ENCODE measurements at regions of chr3 and their contacts with region 1.

Region 1: GRCh38 chr3:71583566-71584449 is at the start of gene FOXP1:
- DNase-seq: peak; percentile 59
- ATAC-seq: peak; percentile 30
- H3K4me3 Mint-ChIP-seq: peak within 1 kb of the TSS; percentile 92
- H3K27ac Mint-ChIP-seq: peak within 1 kb of the TSS; percentile 93
- H3K4me1 Mint-ChIP-seq: peaks cover 53% of the 10 kb centered on the region
- H3K27me3 Mint-ChIP-seq: no peaks in the 10 kb centered on the region
- CTCF ChIP-seq: no peak
- total RNA-seq, gene FOXP1: 491 and 563 TPM in 2 replicates

Region 2: DNA sequence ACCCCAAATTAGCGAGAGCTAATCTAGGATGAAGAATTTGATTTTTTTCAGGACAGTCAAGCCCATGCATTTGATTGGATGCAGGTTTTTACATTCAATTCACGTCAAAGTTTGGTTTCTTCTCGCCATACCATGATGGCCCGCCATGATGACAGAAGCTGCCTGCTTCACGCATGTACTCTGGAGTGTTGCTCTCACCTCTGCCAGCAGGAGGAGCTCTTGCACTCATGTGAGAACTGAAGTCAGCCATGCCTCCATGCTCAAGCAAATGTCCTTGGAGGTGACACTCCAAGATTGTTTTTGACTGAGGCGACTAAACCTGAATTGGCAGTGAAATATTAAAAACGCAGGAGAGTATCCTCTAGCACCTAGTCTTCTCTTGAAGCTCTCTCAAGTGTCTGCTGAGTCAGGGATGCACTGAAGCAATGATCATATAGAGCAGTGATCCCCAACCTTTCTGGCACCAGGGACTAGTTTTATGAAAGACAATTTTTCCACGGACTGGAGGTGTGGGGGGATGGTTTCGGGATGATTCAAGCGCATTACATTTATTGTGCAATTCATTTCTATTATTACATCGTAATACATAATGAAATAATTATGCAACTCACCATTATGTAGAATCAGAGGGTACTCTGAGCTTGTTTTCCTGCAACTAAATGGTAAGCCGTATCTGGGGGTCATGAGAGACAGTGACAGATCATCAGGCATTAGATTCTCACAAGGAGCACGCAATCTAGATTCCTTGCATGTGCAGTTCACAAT is 1463.3 kb before region 1 on chr3:
- CTCF ChIA-PET with region 1: no interaction called
- POLR2A ChIA-PET with region 1: no interaction called
- intact Hi-C with region 1: loop called (anchors 2 kb)
- DNase-seq: peak; percentile 32
- ATAC-seq: peak; percentile 62
- H3K4me3 Mint-ChIP-seq: no peak overlapping the region
- H3K27ac Mint-ChIP-seq: no peak overlapping the region
- H3K4me1 Mint-ChIP-seq: no peaks in the 10 kb centered on the region
- H3K27me3 Mint-ChIP-seq: peaks cover 15% of the 10 kb centered on the region
- CTCF ChIP-seq: peak; percentile 37

Region 3: GRCh38 chr3:70646628-70647027 is 937.2 kb before region 1 on chr3:
- CTCF ChIA-PET with region 1: no interaction called
- POLR2A ChIA-PET with region 1: no interaction called
- intact Hi-C with region 1: no loop called
- DNase-seq: no peak
- ATAC-seq: no peak
- H3K4me3 Mint-ChIP-seq: no peak overlapping the region
- H3K27ac Mint-ChIP-seq: no peak overlapping the region
- H3K4me1 Mint-ChIP-seq: no peaks in the 10 kb centered on the region
- H3K27me3 Mint-ChIP-seq: peaks cover 4% of the 10 kb centered on the region
- CTCF ChIP-seq: no peak

Region 4: GRCh38 chr3:70973558-70973957 is 610.2 kb before region 1 on chr3:
- CTCF ChIA-PET with region 1: no interaction called
- POLR2A ChIA-PET with region 1: interaction called, 3 read pairs
- intact Hi-C with region 1: loop called (anchors 10 kb)
- DNase-seq: no peak
- ATAC-seq: no peak
- H3K4me3 Mint-ChIP-seq: no peak overlapping the region
- H3K27ac Mint-ChIP-seq: no peak overlapping the region
- H3K4me1 Mint-ChIP-seq: peaks cover 10% of the 10 kb centered on the region
- H3K27me3 Mint-ChIP-seq: no peaks in the 10 kb centered on the region
- CTCF ChIP-seq: no peak

Region 5: DNA sequence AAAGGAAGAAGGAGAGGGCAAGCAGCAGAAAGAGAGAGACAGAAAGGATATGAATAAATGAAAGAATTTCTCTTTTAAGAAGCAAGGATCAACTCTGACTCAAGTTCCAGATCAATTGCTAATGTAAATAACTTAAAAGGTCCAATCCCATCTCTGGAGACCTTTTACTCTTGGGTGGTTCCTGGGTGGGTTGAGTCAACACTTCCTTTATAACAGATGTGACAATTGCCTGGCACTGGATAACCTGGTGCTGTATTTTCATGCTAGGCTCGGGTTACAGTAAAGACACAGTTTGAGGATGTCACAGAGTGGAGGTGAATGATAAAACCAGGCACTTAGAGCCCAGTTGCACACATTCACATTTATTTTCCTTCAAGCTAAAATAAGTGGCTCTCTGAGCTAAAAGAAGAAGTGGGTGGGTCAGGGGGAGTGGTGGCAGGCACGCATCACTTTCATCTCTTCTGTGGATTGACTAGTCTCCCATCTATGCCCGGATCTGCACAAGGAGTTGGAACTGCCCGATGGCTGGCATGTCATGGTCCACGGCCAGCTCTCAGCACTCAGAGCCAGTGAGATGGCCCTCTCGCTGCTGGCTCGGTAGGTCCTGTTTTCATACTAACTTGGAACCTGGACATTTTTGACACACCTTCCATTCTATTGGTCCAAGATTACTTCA is 466.1 kb before region 1 on chr3:
- CTCF ChIA-PET with region 1: no interaction called
- POLR2A ChIA-PET with region 1: interaction called, 15 read pairs
- intact Hi-C with region 1: no loop called
- DNase-seq: no peak
- ATAC-seq: peak; percentile 69
- H3K4me3 Mint-ChIP-seq: peak overlapping the region; percentile 64
- H3K27ac Mint-ChIP-seq: peak overlapping the region; percentile 90
- H3K4me1 Mint-ChIP-seq: peaks cover 85% of the 10 kb centered on the region
- H3K27me3 Mint-ChIP-seq: no peaks in the 10 kb centered on the region
- CTCF ChIP-seq: no peak

Region 6: DNA sequence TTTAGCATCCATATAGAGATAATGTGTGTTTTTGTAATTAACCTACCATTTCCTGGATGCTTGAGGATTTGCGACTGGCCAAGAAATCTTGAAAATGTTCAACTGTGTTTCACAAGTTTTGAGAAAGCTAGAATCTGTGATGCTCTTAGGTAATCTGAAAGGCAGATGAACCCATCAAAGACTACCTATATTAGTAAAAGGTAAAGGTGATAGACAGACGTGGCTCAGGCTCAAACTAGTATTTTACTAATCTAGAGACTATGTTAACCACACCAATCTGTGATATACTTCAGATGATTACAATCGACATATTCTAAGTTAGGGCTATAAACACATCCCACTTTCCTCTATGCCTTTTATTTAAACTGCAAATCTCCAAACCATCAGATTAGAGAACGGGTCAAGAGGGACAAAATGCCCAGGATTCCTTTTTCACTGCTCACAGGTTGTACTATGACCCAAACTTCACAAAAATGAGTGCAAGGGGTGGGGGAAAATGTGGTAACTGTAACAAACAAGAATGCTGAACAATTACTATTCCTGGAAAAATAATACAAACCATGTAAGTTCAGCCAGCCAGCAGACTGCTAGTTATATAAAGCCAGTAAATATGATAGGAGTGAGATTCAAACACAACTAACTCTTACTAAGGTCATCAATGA is 295.4 kb before region 1 on chr3:
- CTCF ChIA-PET with region 1: no interaction called
- POLR2A ChIA-PET with region 1: no interaction called
- intact Hi-C with region 1: no loop called
- DNase-seq: no peak
- ATAC-seq: no peak
- H3K4me3 Mint-ChIP-seq: no peak overlapping the region
- H3K27ac Mint-ChIP-seq: peak overlapping the region; percentile 37
- H3K4me1 Mint-ChIP-seq: peaks cover 25% of the 10 kb centered on the region
- H3K27me3 Mint-ChIP-seq: no peaks in the 10 kb centered on the region
- CTCF ChIP-seq: no peak

Region 7: DNA sequence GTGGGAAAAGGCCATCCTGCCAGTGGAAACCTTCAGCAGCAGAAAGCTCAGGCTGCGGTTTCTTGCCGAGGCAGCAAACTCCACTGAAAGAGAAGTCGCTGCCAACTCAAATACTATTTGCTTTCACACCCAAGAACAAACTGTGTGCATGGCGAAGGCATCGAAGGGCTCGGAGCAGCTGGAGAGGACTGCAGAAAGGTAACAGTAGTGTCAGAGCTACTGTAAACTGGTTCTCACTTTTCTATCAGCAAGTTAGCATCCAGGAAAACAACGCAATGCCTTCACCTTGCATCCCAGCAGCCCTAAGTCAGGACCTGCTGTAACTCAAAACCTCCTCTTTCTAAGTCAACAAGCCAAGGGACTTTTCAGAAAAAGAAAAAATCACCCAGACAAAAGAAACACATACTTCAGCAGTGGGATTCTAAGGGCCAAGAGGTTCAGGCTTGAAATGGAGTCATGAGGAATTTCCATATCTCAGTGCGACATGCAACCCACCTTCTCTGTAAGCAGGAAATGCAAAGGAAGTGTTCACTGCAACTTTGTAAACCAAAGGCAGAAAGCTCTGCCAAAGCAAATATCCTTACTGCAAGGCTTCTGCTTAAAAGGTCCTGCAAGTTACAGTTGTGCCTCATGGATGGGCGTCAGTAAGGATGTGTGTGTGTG is 193.8 kb before region 1 on chr3:
- CTCF ChIA-PET with region 1: no interaction called
- POLR2A ChIA-PET with region 1: interaction called, 72 read pairs
- intact Hi-C with region 1: loop called (anchors 1 kb)
- DNase-seq: no peak
- ATAC-seq: peak; percentile 6
- H3K4me3 Mint-ChIP-seq: peak overlapping the region; percentile 73
- H3K27ac Mint-ChIP-seq: peak overlapping the region; percentile 99
- H3K4me1 Mint-ChIP-seq: peaks cover 86% of the 10 kb centered on the region
- H3K27me3 Mint-ChIP-seq: no peaks in the 10 kb centered on the region
- CTCF ChIP-seq: no peak

Region 8: DNA sequence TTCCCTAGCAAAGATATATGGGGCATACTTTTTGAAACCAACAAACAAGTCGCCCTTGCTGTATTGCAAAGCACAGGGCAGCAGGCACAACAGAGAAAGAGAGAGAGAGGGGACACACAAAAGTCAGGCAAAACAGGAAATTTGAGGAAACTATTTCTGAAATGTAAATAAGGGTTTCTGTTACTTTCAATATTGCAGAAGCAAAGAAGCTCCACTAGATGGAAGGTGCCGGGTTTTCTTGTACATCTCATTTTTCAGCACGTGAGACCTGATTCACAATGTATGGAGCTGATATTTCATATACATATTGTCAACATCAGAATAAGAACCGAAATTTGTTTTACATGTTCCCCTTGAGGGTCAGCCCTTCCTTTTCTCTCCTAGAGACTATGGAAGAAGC is 127.7 kb before region 1 on chr3:
- CTCF ChIA-PET with region 1: interaction called, 3 read pairs
- POLR2A ChIA-PET with region 1: interaction called, 34 read pairs
- intact Hi-C with region 1: no loop called
- DNase-seq: no peak
- ATAC-seq: peak; percentile 35
- H3K4me3 Mint-ChIP-seq: peak overlapping the region; percentile 66
- H3K27ac Mint-ChIP-seq: peak overlapping the region; percentile 88
- H3K4me1 Mint-ChIP-seq: peaks cover 76% of the 10 kb centered on the region
- H3K27me3 Mint-ChIP-seq: no peaks in the 10 kb centered on the region
- CTCF ChIP-seq: no peak

Region 9: GRCh38 chr3:71563827-71564226 is 20.0 kb before region 1 on chr3:
- CTCF ChIA-PET with region 1: no interaction called
- POLR2A ChIA-PET with region 1: interaction called, 21 read pairs
- intact Hi-C with region 1: loop called (anchors 1 kb)
- DNase-seq: no peak
- ATAC-seq: peak; percentile 65
- H3K4me3 Mint-ChIP-seq: peak overlapping the region; percentile 20
- H3K27ac Mint-ChIP-seq: peak overlapping the region; percentile 59
- H3K4me1 Mint-ChIP-seq: peaks cover 69% of the 10 kb centered on the region
- H3K27me3 Mint-ChIP-seq: peaks cover 6% of the 10 kb centered on the region
- CTCF ChIP-seq: no peak

Measured in activated B cell treated with CpG ODN at 0.5 μM for 24 hours (primary cell).